CD4-positive, alpha-beta memory T cell (primary cell): ENCODE measurements at regions of chr2 and their contacts with region 1.

Region 1: DNA sequence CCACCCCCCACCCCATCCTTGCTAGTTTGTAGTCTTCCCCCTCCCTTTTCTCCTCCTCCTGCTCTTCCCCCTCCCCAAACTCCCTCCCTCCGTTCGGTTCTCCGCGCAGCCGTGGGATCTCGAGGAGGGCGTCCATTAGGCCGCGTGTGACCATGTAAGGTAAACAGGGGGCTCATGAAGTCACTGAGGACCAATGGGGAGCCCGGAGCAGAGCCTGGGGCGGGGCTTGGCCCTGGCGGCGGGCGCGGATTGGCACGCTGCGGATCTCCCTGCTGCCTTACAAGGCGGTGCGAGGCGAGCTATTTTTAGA is 246 bp upstream of the KLF7 start:
- DNase-seq: peak; percentile 90 to 97 (median 96)
- H3K4me3 ChIP-seq: peak overlapping the region; percentile 36 to 67
- H3K4me3 Mint-ChIP-seq: peak overlapping the region; percentile 89 to 99 (median 95)
- H3K27ac ChIP-seq: peak overlapping the region; percentile 97
- H3K27ac Mint-ChIP-seq: peak overlapping the region; percentile 91 to 98 (median 96)
- H3K4me1 ChIP-seq: peaks cover 40% of the 10 kb centered on the region
- H3K4me1 Mint-ChIP-seq: peaks cover 27 to 60% (median 40%) of the 10 kb centered on the region in 4 donors
- H3K27me3 ChIP-seq: no peaks in the 10 kb centered on the region
- H3K27me3 Mint-ChIP-seq: peaks cover 3 to 10% of the 10 kb centered on the region in 2 donors

Region 2: DNA sequence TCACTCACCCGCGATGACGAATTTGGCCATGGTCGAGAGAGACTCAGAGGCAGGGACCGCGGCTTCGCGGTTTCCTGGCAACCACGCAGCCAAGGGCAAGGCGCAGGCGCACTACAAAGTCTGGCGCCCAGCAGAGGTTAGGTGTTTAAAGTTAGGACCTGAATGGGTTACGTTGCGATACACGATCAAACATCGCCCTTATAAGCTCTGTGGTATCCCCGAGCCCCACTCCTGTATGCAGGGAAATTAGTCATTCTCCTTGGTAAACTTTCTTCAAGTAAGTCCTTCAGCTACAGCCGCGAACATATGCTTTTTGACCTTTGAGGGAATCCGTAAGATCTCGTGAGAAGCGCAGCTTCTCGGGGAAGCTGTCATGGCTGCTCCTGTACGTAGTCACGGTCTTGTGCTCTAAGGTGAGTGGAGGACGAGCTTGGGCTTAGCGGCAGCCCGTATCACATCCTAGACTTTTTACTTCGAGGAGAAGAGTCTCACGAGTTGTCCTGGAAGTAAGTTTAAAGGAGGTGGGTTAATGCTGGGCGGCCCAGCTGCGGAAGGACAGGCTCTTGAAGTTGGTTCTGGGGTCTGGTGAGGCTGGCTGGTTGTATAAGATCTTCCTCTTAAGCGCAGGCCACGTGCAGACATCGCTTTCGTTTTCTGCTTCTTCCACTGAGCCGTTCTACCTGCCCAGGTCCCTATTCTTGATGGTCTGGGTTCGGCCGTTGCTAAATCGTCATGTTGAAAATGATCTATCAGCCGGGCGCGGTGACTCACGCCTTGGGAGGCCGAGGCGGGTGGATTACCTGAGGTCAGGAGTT is 400.5 kb before region 1 on chr2 and contains the starts of genes FASTKD2 and MDH1B:
- CTCF ChIA-PET with region 1: no interaction called
- POLR2A ChIA-PET with region 1: interaction called, 7 read pairs
- intact Hi-C with region 1: loop called (anchors 10 kb)
- DNase-seq: peak; percentile 88 to 91 (median 89)
- H3K4me3 ChIP-seq: peak within 1 kb of the TSS; percentile 54 to 82
- H3K4me3 Mint-ChIP-seq: peak within 1 kb of the TSS; percentile 89 to 98 (median 95)
- H3K27ac ChIP-seq: peak within 1 kb of the TSS; percentile 91
- H3K27ac Mint-ChIP-seq: peak within 1 kb of the TSS; percentile 96 to 99 (median 97)
- H3K4me1 ChIP-seq: peaks cover 39% of the 10 kb centered on the region
- H3K4me1 Mint-ChIP-seq: peaks cover 20 to 45% (median 36%) of the 10 kb centered on the region in 4 donors
- H3K27me3 ChIP-seq: no peaks in the 10 kb centered on the region
- H3K27me3 Mint-ChIP-seq: no peaks in the 10 kb centered on the region
- total RNA-seq, gene FASTKD2: 23.0 to 23.4 TPM
- total RNA-seq, gene MDH1B: 0.17 TPM in 1 of 2 experiments, not detected in the other

Region 3: DNA sequence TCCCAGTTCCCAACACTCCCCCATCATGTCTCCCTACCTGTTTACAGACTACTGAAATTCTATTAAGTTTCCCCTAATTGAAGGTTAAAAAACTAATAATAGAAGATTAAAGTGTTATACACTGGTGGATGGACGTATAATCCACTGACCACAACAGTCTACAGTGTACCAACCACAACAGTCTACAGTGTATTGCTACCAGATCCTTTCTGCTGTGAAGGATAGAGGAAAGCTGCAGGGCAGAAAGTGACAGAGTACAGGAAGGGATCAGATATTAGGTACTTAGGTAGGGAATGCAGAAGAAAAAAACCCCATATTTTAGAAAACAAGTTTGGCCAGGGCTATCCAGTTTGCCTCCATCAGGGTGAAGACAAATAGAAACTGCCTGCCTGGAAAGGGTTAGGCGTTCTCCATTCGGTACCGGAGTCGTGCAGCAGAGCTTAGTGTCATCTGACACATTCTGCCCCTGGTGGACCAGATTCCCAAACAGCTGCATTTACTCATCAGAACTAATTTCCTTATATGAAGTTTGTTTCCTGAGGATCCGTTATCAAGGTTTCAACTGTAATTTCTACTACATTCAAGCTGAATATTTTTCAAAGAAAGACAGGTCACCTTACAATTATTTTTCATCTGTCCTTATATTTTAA is 50.2 kb before region 1 on chr2:
- CTCF ChIA-PET with region 1: no interaction called
- POLR2A ChIA-PET with region 1: interaction called, 6 read pairs
- intact Hi-C with region 1: loop called (anchors 10 kb)
- DNase-seq: no peak
- H3K4me3 ChIP-seq: no peak overlapping the region
- H3K4me3 Mint-ChIP-seq: no peak overlapping the region
- H3K27ac ChIP-seq: no peak overlapping the region
- H3K27ac Mint-ChIP-seq: no peak overlapping the region
- H3K4me1 ChIP-seq: no peaks in the 10 kb centered on the region
- H3K4me1 Mint-ChIP-seq: peaks cover 4 to 23% (median 6%) of the 10 kb centered on the region in 4 donors
- H3K27me3 ChIP-seq: no peaks in the 10 kb centered on the region
- H3K27me3 Mint-ChIP-seq: no peaks in the 10 kb centered on the region

Region 4: GRCh38 chr2:207149249-207150213 is 16.5 kb before region 1 on chr2:
- CTCF ChIA-PET with region 1: interaction called, 5 read pairs
- POLR2A ChIA-PET with region 1: interaction called, 298 read pairs
- intact Hi-C with region 1: loop called (anchors 1 kb)
- DNase-seq: no peak
- H3K4me3 ChIP-seq: no peak overlapping the region
- H3K4me3 Mint-ChIP-seq: peak overlapping the region in 5 of 8 donors; percentile 8 to 61 (median 43)
- H3K27ac ChIP-seq: no peak overlapping the region
- H3K27ac Mint-ChIP-seq: peak overlapping the region in 6 of 7 donors; percentile 49 to 85 (median 69)
- H3K4me1 ChIP-seq: peaks cover 49% of the 10 kb centered on the region
- H3K4me1 Mint-ChIP-seq: peaks cover 48 to 84% (median 59%) of the 10 kb centered on the region in 4 donors
- H3K27me3 ChIP-seq: no peaks in the 10 kb centered on the region
- H3K27me3 Mint-ChIP-seq: no peaks in the 10 kb centered on the region

Region 5: GRCh38 chr2:207710814-207711740 is 545.1 kb after region 1 on chr2 and contains the start of gene CCNYL1:
- CTCF ChIA-PET with region 1: no interaction called
- POLR2A ChIA-PET with region 1: interaction called, 9 read pairs
- intact Hi-C with region 1: loop called (anchors 1 kb)
- DNase-seq: peak; percentile 96 to 99 (median 98)
- H3K4me3 ChIP-seq: peak within 1 kb of the TSS; percentile 70 to 88
- H3K4me3 Mint-ChIP-seq: peak within 1 kb of the TSS; percentile 90 to 98 (median 96)
- H3K27ac ChIP-seq: peak within 1 kb of the TSS; percentile 73
- H3K27ac Mint-ChIP-seq: peak within 1 kb of the TSS; percentile 92 to 96 (median 94)
- H3K4me1 ChIP-seq: peaks cover 20% of the 10 kb centered on the region
- H3K4me1 Mint-ChIP-seq: peaks cover 14 to 37% (median 21%) of the 10 kb centered on the region in 4 donors
- H3K27me3 ChIP-seq: no peaks in the 10 kb centered on the region
- H3K27me3 Mint-ChIP-seq: peaks cover 0 to 1% of the 10 kb centered on the region in 2 donors
- total RNA-seq, gene CCNYL1: 9.7 to 10.5 TPM

Region 6: DNA sequence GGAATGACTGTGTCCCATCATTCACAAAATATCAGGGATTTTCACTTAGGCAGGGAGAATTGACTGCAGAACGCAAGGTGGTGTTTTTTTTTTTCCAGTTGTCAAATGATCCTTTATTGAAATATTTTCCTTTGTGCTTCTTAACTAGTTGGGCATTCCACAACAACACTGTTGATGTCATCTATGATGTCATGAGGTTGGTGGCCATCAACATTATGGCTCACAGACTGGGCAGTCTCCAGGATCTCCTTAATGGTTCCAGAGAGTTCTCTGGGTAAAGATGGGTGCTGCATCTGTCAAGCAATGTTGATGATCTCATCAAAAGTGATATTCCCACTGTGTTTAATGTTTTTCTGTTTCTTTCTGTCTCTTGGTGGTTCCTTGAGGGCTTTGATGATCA is 891.1 kb after region 1 on chr2:
- CTCF ChIA-PET with region 1: no interaction called
- POLR2A ChIA-PET with region 1: no interaction called
- intact Hi-C with region 1: no loop called
- DNase-seq: no peak
- H3K4me3 ChIP-seq: no peak overlapping the region
- H3K4me3 Mint-ChIP-seq: no peak overlapping the region
- H3K27ac ChIP-seq: no peak overlapping the region
- H3K27ac Mint-ChIP-seq: no peak overlapping the region
- H3K4me1 ChIP-seq: no peaks in the 10 kb centered on the region
- H3K4me1 Mint-ChIP-seq: no peaks in the 10 kb centered on the region
- H3K27me3 ChIP-seq: no peaks in the 10 kb centered on the region
- H3K27me3 Mint-ChIP-seq: peaks cover 10 to 14% of the 10 kb centered on the region in 2 donors